ENCODE measurements at regions of chr20 and their contacts with region 1.

Region 1: DNA sequence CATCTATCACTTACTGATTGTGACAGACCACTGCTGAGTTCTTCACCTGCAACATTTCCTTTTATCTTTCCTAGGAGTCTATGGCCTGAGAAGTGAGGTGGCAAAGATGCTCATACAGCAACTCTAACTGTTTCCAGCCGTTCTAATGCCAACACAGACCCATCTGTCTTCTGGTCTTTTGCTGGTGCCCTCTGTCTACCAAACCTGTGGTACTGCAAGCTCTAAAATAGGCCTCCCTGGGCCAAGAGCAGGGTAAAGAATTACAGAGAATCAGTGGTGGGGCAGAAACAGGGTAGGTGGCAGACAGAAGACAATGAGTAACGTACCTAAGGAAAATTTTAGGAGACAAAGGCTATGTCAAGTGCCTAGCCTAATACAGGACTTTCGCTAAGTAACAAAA is 611.0 kb upstream of the FLRT3 start:
- DNase-seq: no peak
- H3K4me3 ChIP-seq: no peak overlapping the region
- CTCF ChIP-seq: no peak
- POLR2A ChIP-seq: no peak

Region 2: DNA sequence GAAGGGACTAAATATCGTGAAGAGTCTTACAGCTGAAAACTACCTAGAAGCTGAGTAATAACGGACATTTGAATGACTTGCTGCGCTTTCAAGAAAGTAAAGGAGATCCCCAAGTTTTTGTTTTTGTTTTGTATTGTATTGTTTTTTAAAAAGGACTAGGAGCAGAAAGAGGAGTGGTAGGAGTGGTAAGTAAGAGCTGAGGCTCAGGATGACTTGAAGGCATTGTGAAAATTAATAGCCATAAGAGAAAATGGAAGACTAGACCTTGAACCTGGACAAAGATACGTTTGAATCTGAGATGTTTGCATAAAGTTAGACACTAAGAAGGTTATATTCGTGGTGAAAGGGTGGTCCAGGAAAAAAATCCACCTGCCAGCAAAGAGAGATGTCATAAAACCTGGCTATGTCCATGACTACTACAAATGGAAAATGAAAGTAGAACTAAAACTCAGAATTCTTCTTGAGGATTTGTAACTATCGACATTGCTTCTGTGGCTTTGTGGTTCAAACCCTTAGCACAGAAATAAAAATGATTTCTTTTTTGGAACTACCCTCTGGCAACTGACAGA is 213.7 kb after region 1 on chr20:
- intact Hi-C with region 1: no loop called
- DNase-seq: no peak
- H3K4me3 ChIP-seq: no peak overlapping the region
- CTCF ChIP-seq: no peak
- POLR2A ChIP-seq: no peak

Region 3: GRCh38 chr20:15179381-15179780 is 231.0 kb after region 1 on chr20:
- intact Hi-C with region 1: loop called (anchors 10 kb)
- DNase-seq: no peak
- H3K4me3 ChIP-seq: no peak overlapping the region
- CTCF ChIP-seq: no peak
- POLR2A ChIP-seq: no peak

Measured in lower leg skin (tissue), 4 donors.